Sigmoid colon (tissue), 7 donors: ENCODE measurements at regions of chr17 and their contacts with region 1.

Region 1: DNA sequence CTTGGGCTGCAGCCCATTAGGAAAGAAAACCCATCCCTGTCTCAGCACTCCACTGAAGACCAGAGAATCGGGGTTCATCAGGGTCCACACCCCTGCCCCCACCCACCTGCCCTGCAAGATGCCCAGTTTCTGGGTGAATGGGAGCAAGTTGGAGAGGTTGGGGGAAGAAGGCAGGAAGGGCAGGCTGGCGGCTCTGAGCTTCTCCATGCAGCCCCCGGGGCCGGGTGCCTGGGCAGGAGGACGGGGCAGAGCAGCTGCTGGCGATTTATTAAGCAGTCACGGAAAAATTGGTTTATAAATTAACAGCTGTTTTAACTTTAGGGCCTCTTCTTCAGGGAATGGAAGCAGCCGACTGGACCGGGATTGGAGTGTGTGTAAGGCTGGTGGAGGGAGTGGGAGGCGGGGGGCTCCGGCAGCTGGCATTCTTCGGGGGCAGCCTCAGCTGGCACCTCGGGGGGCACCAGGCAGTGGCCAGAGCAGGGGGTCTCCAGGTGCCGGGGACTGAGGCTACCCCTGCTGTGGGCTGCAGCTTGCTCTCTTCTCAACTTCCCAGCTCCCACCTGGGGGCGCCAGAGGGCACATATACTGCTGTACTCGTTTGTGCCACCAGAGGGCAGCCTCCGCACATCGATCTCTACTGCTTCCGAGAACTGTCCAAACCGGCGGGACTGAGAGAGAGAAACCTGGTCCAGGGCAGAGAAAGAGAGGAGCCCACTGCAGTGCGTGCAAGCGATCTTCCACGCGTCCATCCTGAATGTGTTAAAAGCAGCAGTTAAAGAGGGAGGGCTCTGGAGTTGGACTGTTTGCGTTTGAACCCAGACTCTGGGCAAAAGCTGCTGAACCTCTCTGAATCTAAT is 5.0 kb upstream of the PPP1R1B start:
- DNase-seq: peak; percentile 93
- H3K4me3 ChIP-seq: no peak overlapping the region
- H3K27ac ChIP-seq: no peak overlapping the region
- H3K4me1 ChIP-seq: peaks cover 0 to 38% (median 30%) of the 10 kb centered on the region in 4 donors
- H3K27me3 ChIP-seq: peaks cover 14 to 32% (median 22%) of the 10 kb centered on the region in 3 donors
- CTCF ChIP-seq: peak; percentile 99 to 100 (median 99)
- EP300 ChIP-seq: no peak
- POLR2A ChIP-seq: no peak

Region 2: GRCh38 chr17:39473310-39473709 is 148.4 kb before region 1 on chr17:
- intact Hi-C with region 1: no loop called
- DNase-seq: peak; percentile 28
- H3K4me3 ChIP-seq: no peak overlapping the region
- H3K27ac ChIP-seq: no peak overlapping the region
- H3K4me1 ChIP-seq: no peaks in the 10 kb centered on the region
- H3K27me3 ChIP-seq: no peaks in the 10 kb centered on the region
- CTCF ChIP-seq: no peak
- EP300 ChIP-seq: no peak
- POLR2A ChIP-seq: no peak

Region 3: DNA sequence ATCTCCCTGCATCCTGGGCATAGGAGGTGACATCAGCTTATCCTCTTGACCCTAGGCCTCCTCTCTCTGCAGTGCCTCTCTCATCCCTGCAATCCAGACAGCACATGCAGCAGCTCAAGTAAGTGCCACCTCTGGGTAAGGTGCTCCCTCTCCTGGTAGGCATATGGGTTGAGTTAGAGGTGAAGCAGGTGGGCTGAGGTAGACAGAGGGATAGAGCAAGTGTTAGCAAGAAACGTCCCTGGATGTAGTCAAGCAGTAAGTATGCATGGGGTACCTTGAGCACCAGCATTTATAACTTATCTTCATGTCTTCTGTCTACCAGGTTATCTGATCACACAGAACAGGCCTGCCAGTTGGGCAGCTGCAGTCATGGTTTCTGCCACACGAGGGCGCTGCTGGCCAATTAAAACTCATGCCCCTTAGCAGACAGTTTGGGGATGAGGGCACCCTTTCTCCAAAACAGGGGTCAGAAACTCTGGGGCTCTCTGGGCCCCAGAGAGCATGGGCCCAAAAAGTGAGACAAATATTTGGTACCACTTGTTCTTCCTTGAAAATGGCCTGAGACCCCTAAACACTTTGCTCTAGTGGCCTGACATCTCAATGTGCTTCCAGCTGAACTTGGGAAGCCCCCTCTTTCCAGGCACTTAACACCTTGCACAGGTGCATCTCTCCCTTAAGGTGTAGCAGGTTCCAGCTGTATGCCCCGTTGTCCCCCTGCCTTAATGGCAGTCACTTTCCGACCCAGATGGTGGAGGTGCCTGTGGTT is 73.9 kb before region 1 on chr17:
- intact Hi-C with region 1: loop called (anchors 1 kb)
- DNase-seq: peak; percentile 72
- H3K4me3 ChIP-seq: no peak overlapping the region
- H3K27ac ChIP-seq: peak overlapping the region in 1 of 4 donors; percentile 55
- H3K4me1 ChIP-seq: peaks cover 0 to 26% (median 15%) of the 10 kb centered on the region in 4 donors
- H3K27me3 ChIP-seq: no peaks in the 10 kb centered on the region
- CTCF ChIP-seq: peak; percentile 50 to 81 (median 77)
- EP300 ChIP-seq: no peak
- POLR2A ChIP-seq: no peak

Region 4: DNA sequence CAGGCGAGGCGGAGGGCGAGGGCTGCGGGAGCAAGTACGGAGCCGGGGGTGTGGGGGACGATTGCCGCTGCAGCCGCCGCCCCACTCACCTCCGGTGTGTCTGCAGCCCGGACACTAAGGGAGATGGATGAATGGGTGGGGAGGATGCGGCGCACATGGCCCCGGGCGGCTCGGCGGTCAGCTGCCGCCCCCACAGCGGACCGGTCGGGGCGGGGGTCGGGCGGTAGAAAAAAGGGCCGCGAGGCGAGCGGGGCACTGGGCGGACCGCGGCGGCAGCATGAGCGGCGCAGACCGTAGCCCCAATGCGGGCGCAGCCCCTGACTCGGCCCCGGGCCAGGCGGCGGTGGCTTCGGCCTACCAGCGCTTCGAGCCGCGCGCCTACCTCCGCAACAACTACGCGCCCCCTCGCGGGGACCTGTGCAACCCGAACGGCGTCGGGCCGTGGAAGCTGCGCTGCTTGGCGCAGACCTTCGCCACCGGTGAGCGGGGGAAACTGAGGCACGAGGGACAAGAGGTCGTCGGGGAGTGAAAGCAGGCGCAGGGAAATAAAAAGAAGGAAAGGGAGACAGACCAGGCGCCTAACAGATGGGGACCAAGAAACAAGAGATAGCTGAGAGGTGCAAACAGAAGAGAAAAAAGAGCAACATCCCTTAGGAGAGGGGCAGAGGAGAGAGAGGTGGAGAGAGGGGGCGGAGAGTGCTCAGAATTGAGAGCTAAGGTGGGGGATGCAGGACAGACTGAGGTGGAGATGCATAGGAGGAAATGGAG is 46.6 kb after region 1 on chr17 and contains the start of gene PNMT:
- intact Hi-C with region 1: loop called (anchors 2 kb)
- DNase-seq: no peak
- H3K4me3 ChIP-seq: peak within 1 kb of the TSS; percentile 6 to 54 (median 41)
- H3K27ac ChIP-seq: peak within 1 kb of the TSS in 2 of 4 donors; percentile 32 to 52
- H3K4me1 ChIP-seq: peaks cover 0 to 33% (median 26%) of the 10 kb centered on the region in 4 donors
- H3K27me3 ChIP-seq: peaks cover 39 to 79% (median 60%) of the 10 kb centered on the region in 3 donors
- CTCF ChIP-seq: peak in 3 of 4 experiments; percentile 36 to 55 (median 40)
- EP300 ChIP-seq: no peak
- POLR2A ChIP-seq: no peak
- total RNA-seq, gene PNMT: 2.8 to 5.4 (median 5.1) TPM

Region 5: GRCh38 chr17:39730095-39730921 is 108.6 kb after region 1 on chr17 and contains the start of gene MIEN1:
- intact Hi-C with region 1: loop called (anchors 2 kb)
- DNase-seq: peak; percentile 95
- H3K4me3 ChIP-seq: peak within 1 kb of the TSS; percentile 62 to 86 (median 72)
- H3K27ac ChIP-seq: peak within 1 kb of the TSS; percentile 86 to 91 (median 87)
- H3K4me1 ChIP-seq: peaks cover 0 to 12% (median 10%) of the 10 kb centered on the region in 4 donors
- H3K27me3 ChIP-seq: no peaks in the 10 kb centered on the region
- CTCF ChIP-seq: peak; percentile 82 to 91 (median 82)
- EP300 ChIP-seq: no peak
- POLR2A ChIP-seq: peak; percentile 62 to 82
- total RNA-seq, gene MIEN1: 52.4 to 65.5 (median 54.8) TPM

Region 6: DNA sequence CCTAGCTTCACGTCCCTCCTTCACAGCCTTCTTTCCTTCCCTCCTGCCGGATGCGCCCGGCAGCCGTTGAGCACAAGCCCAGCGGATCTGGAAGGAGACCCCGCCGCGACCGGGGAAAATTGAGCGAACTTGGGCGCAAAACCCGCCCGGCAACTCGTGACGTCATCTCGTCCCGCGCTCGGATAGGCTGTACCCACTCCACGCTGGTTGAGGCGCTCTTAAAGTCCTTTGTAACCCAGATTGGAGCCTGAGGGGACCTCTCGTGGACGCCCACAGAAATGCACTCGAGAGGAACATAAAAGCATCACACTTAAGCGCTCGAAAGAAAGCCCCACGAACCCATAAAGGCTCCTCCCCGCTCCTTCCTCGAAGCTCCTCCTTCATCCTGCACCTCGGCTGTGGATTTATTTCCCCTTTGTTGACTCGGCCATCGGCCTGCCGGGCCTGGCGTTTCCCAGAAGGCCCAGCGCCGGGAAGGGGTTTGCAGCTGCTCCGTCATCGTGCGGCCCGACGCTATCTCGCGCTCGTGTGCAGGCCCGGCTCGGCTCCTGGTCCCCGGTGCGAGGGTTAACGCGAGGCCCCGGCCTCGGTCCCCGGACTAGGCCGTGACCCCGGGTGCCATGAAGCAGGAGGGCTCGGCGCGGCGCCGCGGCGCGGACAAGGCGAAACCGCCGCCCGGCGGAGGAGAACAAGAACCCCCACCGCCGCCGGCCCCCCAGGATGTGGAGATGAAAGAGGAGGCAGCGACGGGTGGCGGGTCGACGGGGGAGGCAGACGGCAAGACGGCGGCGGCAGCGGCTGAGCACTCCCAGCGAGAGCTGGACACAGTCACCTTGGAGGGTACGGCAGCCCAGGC is 358.8 kb after region 1 on chr17 and contains the start of gene PSMD3:
- intact Hi-C with region 1: loop called (anchors 10 kb)
- DNase-seq: peak; percentile 99
- H3K4me3 ChIP-seq: peak within 1 kb of the TSS; percentile 79 to 99 (median 89)
- H3K27ac ChIP-seq: peak within 1 kb of the TSS; percentile 95 to 98 (median 97)
- H3K4me1 ChIP-seq: peaks cover 0 to 40% (median 30%) of the 10 kb centered on the region in 4 donors
- H3K27me3 ChIP-seq: no peaks in the 10 kb centered on the region
- CTCF ChIP-seq: peak; percentile 64 to 96 (median 73)
- EP300 ChIP-seq: peak in 1 of 4 donors; percentile 77
- POLR2A ChIP-seq: peak; percentile 88 to 90
- total RNA-seq, gene PSMD3: 53.2 to 71.3 (median 64.2) TPM